ENCODE measurements at regions of chr15 and their contacts with region 1.

Region 1: DNA sequence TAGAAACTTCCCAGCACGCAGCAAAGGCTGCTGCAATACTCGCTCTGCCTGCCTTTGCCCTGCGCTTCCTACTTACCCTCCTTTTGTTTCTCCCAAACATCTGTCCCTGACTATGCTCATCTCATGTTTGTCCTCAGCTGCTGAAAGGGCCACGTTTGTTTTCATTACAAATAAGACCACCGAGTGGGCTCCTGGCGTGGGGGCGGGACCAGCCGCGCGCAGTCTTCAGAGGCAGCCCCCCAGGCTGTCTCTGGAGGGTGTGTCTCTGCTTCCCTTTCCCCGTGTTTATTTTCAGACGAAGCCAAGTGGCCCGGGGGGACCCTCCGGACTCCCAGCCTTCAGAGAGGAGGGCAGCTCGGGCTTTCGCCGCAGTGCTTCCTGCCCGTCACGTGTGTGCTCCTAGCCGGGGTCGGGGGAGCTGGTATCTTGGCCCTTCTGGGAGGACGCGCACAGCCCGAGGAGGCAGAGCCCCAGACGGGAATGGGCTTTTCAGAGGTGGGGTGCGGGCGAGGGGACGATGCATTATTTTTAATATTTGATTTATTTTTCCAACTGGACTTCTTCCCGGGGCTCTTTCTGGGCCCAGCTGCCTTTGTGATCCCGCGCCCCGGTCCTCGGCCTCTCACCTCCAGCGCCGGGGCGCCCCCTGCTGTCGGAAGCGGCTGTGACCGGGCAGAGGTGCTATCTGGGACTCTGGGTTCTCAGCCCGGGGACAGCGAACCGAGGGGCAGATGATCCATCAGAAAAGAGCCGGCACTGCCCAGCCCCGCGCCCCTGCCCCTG is 70.0 kb upstream of the CGNL1 start:
- DNase-seq: peak; percentile 86
- H3K4me3 Mint-ChIP-seq: peak overlapping the region; percentile 54
- H3K27ac Mint-ChIP-seq: no peak overlapping the region
- H3K4me1 Mint-ChIP-seq: peaks cover 3% of the 10 kb centered on the region
- H3K27me3 Mint-ChIP-seq: peaks cover 7% of the 10 kb centered on the region

Region 2: DNA sequence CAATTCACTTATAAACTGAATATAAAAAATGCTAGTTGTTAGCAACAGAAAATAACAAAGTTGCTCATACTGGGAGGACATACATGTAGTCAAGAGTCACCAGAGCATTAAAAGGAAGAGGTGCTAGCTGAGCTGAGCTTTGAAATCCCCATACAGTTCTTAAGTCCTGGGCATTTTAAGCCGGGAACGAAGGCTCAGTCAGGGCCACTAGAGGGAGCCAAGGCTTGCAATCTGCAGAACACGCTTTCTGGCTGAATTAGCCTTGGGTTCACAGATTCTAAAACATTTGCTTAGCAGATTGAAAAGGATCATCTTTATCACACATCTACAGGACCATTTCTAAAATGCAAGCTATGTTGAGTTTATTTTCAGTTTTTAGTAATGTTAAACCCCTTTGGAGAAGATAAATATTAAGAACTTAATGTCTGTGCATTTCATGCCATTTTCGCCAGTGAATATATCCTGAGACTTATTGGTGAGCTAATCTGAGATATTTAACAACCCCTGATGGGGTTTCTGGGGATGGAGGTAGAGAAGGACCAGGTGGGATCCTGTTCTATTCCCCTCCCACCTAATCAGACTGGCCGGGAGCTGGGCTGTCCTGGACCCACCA is 815.1 kb before region 1 on chr15:
- CTCF ChIA-PET with region 1: interaction called, 14 read pairs
- intact Hi-C with region 1: loop called (anchors 1 kb)
- DNase-seq: peak; percentile 81
- H3K4me3 Mint-ChIP-seq: no peak overlapping the region
- H3K27ac Mint-ChIP-seq: no peak overlapping the region
- H3K4me1 Mint-ChIP-seq: no peaks in the 10 kb centered on the region
- H3K27me3 Mint-ChIP-seq: peaks cover 3% of the 10 kb centered on the region

Region 3: GRCh38 chr15:56821721-56822425 is 484.5 kb before region 1 on chr15:
- CTCF ChIA-PET with region 1: interaction called, 5 read pairs
- intact Hi-C with region 1: loop called (anchors 1 kb)
- DNase-seq: peak; percentile 61
- H3K4me3 Mint-ChIP-seq: no peak overlapping the region
- H3K27ac Mint-ChIP-seq: no peak overlapping the region
- H3K4me1 Mint-ChIP-seq: no peaks in the 10 kb centered on the region
- H3K27me3 Mint-ChIP-seq: no peaks in the 10 kb centered on the region

Region 4: GRCh38 chr15:57017024-57017423 is 289.3 kb before region 1 on chr15:
- CTCF ChIA-PET with region 1: no interaction called
- intact Hi-C with region 1: loop called (anchors 2 kb)
- DNase-seq: peak; percentile 5
- H3K4me3 Mint-ChIP-seq: no peak overlapping the region
- H3K27ac Mint-ChIP-seq: no peak overlapping the region
- H3K4me1 Mint-ChIP-seq: peaks cover 29% of the 10 kb centered on the region
- H3K27me3 Mint-ChIP-seq: no peaks in the 10 kb centered on the region

Region 5: DNA sequence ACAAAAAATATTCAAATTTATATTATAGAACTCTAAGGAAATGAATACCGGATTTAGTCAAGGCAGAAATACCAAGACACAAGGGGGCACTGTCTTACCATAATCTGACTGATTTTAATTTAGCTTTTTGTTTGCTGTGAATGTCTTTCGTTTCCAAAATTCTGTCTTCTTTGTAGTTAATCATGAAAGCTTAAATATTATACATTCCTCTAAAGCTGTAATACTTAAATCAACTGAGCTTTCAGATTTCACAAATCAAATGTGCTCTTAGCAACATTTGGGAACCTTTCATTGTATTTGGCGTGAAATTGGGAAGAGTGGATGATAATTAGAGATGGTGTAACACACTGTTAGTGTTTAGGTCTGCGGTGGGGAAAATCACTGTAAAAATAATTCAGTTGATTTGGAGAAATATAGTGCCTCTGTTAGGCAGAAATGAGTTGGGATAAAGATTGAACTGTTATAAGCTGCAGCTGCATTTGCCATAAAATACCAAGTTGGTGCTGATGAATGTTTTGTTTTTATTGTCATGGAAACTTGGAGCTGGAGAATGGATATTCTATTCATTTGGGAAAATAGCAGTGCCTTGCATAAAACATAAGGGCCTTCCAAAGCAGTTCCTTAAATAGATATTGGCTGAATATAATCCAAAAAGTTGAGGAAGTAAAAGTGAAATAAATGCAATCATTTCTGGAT is 159.7 kb before region 1 on chr15:
- CTCF ChIA-PET with region 1: interaction called, 30 read pairs
- intact Hi-C with region 1: loop called (anchors 1 kb)
- DNase-seq: no peak
- H3K4me3 Mint-ChIP-seq: no peak overlapping the region
- H3K27ac Mint-ChIP-seq: no peak overlapping the region
- H3K4me1 Mint-ChIP-seq: peaks cover 6% of the 10 kb centered on the region
- H3K27me3 Mint-ChIP-seq: no peaks in the 10 kb centered on the region